CD4-positive, alpha-beta memory T cell (primary cell): ENCODE measurements at regions of chr3 and their contacts with region 1.

Region 1: DNA sequence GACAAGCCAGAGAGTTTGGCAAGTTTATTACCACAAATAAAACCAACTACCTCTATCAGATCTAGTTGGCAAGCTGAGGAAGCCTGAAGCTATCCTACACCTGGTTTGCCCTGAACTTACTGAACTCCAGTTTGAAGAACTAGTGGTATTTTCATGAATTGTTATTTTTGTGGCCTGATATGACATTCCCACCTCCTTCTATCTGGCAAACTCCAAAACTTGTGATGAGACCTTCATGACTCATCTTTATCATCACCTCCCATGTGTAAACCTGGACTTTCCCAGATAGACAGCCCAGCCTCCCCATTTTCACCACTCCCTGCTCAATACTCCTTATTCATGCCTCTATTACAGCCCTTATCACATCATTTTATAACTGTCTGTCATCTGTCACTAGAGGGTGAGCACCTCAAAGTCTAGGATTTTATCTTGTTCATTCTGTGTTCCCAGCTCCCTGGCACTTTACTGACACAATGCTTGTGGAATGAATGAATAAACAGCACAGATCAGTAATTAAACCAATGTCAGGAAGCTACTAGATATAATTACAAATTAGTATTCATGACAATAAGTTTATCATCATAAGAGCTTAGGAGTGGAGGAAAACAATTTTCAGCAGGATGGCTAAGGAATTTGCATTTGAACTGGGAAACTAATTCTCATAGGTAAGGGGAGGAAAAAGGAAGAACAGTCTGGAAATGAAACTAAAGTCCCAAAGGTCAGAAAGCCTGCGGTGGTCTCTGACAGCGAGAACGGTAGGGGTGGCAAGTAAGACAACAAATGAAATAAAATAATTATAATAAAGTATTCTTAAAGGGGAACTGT is 13.2 kb upstream of the TRANK1 start:
- DNase-seq: no peak
- H3K4me3 ChIP-seq: no peak overlapping the region
- H3K4me3 Mint-ChIP-seq: peak overlapping the region in 5 of 8 donors; percentile 4 to 65 (median 40)
- H3K27ac ChIP-seq: no peak overlapping the region
- H3K27ac Mint-ChIP-seq: peak overlapping the region; percentile 61 to 85 (median 77)
- H3K4me1 ChIP-seq: peaks cover 9% of the 10 kb centered on the region
- H3K4me1 Mint-ChIP-seq: peaks cover 10 to 12% (median 11%) of the 10 kb centered on the region in 4 donors
- H3K27me3 ChIP-seq: no peaks in the 10 kb centered on the region
- H3K27me3 Mint-ChIP-seq: no peaks in the 10 kb centered on the region

Region 2: DNA sequence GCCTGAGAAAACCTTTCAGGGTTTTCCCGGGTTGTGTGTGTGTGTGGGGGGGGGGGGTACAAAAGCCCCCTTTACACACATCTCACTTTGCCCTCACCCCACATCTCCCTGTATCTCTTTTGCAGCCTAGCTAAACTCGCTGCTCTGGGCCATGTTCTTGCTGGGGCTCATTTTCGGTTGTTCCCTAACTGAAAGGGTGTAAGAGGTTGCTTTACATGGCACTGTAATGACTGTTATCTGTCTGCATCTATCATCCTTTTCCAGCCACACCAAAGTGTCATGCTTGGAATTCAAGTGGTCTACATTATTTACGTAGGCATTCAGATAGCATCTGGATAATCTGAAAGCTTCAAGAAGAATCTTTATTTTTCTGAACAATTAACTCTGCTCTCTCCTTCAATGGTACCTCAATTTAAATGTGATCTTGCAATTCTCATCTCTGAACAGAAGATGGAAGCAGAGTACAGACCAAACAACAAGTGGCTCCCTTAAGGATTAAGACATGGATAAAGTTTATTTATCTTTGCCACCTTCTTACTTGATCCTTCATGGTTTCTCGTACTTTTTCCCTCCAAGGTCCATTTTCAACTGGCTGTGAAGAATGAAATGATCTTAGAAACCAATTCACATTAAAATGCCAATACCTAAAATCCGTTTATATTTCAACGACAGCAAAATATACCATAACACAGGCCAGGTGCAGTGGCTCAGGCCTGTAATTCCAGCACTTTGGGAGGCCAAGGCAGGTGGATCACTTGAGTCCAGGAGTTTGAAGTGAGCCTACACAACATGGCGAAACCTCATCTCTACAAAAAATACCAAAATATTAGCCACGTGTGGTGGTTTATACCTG is 228.6 kb before region 1 on chr3:
- CTCF ChIA-PET with region 1: interaction called, 29 read pairs
- POLR2A ChIA-PET with region 1: no interaction called
- intact Hi-C with region 1: no loop called
- DNase-seq: peak in 4 of 5 donors; percentile 14 to 26 (median 20)
- H3K4me3 ChIP-seq: no peak overlapping the region
- H3K4me3 Mint-ChIP-seq: no peak overlapping the region
- H3K27ac ChIP-seq: no peak overlapping the region
- H3K27ac Mint-ChIP-seq: no peak overlapping the region
- H3K4me1 ChIP-seq: no peaks in the 10 kb centered on the region
- H3K4me1 Mint-ChIP-seq: no peaks in the 10 kb centered on the region
- H3K27me3 ChIP-seq: no peaks in the 10 kb centered on the region
- H3K27me3 Mint-ChIP-seq: peaks cover 2 to 15% of the 10 kb centered on the region in 2 donors

Region 3: DNA sequence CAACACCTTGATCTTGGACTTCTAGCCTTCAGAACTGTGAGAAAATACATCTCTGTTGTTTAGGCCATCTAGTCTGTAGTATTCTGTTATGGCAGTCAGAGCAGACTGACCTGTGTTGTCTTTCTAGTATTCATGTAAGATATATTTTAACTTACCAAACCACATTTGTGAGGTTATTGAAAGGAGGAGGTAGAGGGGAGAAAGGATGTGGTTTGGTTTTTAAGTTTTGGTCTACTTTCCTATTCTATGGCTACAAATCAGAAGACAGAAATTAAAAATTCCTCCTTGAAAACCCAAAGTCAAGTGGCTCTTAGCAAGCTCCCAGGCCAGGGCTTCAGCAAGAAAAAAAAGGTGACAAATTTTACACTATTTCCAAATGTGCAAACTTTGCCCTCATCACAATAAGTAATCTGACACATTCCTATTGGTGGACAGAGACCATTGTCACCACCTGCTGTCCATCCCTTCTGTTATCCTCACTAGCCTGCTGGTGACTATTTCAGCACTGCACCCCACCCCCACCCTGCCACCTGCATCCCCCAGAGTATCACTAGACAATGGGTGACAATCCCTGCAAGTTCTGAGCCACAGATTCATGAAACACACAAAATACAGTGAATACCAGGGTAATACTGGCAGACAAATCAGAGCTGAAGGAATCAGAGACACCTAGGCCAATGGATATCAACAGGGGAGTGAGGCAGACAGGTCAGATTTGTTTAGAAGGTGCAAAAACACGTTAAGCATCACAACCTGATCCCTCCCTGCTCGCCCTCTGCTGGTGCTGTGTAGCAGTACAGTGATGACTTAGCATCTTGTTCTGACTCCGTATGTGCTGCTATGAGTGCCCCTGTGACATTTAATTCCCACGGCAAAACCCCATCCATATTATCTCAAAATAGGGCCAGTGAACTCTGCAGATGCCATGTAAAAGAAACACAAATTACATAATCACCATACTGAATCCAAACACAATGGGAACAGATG is 114.7 kb before region 1 on chr3:
- CTCF ChIA-PET with region 1: interaction called, 11 read pairs
- POLR2A ChIA-PET with region 1: no interaction called
- intact Hi-C with region 1: loop called (anchors 1 kb)
- DNase-seq: peak; percentile 25 to 49 (median 39)
- H3K4me3 ChIP-seq: no peak overlapping the region
- H3K4me3 Mint-ChIP-seq: peak overlapping the region in 7 of 8 donors; percentile 18 to 79 (median 61)
- H3K27ac ChIP-seq: no peak overlapping the region
- H3K27ac Mint-ChIP-seq: peak overlapping the region; percentile 12 to 84 (median 69)
- H3K4me1 ChIP-seq: peaks cover 24% of the 10 kb centered on the region
- H3K4me1 Mint-ChIP-seq: peaks cover 25 to 42% (median 34%) of the 10 kb centered on the region in 4 donors
- H3K27me3 ChIP-seq: no peaks in the 10 kb centered on the region
- H3K27me3 Mint-ChIP-seq: no peaks in the 10 kb centered on the region

Region 4: GRCh38 chr3:36876181-36876936 is 81.7 kb before region 1 on chr3:
- CTCF ChIA-PET with region 1: interaction called, 31 read pairs
- POLR2A ChIA-PET with region 1: interaction called, 10 read pairs
- intact Hi-C with region 1: no loop called
- DNase-seq: peak; percentile 66 to 81 (median 74)
- H3K4me3 ChIP-seq: peak overlapping the region; percentile 6 to 24
- H3K4me3 Mint-ChIP-seq: peak overlapping the region; percentile 63 to 85 (median 78)
- H3K27ac ChIP-seq: peak overlapping the region; percentile 71
- H3K27ac Mint-ChIP-seq: peak overlapping the region; percentile 83 to 97 (median 95)
- H3K4me1 ChIP-seq: peaks cover 48% of the 10 kb centered on the region
- H3K4me1 Mint-ChIP-seq: peaks cover 50 to 65% (median 54%) of the 10 kb centered on the region in 4 donors
- H3K27me3 ChIP-seq: no peaks in the 10 kb centered on the region
- H3K27me3 Mint-ChIP-seq: no peaks in the 10 kb centered on the region

Region 5: GRCh38 chr3:36923523-36923943 is 34.5 kb before region 1 on chr3:
- CTCF ChIA-PET with region 1: interaction called, 28 read pairs
- POLR2A ChIA-PET with region 1: no interaction called
- intact Hi-C with region 1: no loop called
- DNase-seq: peak in 1 of 5 donors; percentile 25
- H3K4me3 ChIP-seq: no peak overlapping the region
- H3K4me3 Mint-ChIP-seq: peak overlapping the region in 2 of 8 donors; percentile 5 to 58
- H3K27ac ChIP-seq: no peak overlapping the region
- H3K27ac Mint-ChIP-seq: peak overlapping the region in 2 of 7 donors; percentile 6 to 64
- H3K4me1 ChIP-seq: peaks cover 4% of the 10 kb centered on the region
- H3K4me1 Mint-ChIP-seq: peaks cover 9 to 14% (median 11%) of the 10 kb centered on the region in 4 donors
- H3K27me3 ChIP-seq: no peaks in the 10 kb centered on the region
- H3K27me3 Mint-ChIP-seq: no peaks in the 10 kb centered on the region

Region 6: GRCh38 chr3:36969540-36970432 is 11.7 kb after region 1 on chr3:
- CTCF ChIA-PET with region 1: interaction called, 34 read pairs
- POLR2A ChIA-PET with region 1: interaction called, 3 read pairs
- intact Hi-C with region 1: no loop called
- DNase-seq: peak; percentile 43 to 83 (median 57)
- H3K4me3 ChIP-seq: no peak overlapping the region
- H3K4me3 Mint-ChIP-seq: peak overlapping the region in 5 of 8 donors; percentile 4 to 58 (median 29)
- H3K27ac ChIP-seq: peak overlapping the region; percentile 37
- H3K27ac Mint-ChIP-seq: peak overlapping the region; percentile 49 to 94 (median 87)
- H3K4me1 ChIP-seq: peaks cover 24% of the 10 kb centered on the region
- H3K4me1 Mint-ChIP-seq: peaks cover 14 to 31% (median 25%) of the 10 kb centered on the region in 4 donors
- H3K27me3 ChIP-seq: no peaks in the 10 kb centered on the region
- H3K27me3 Mint-ChIP-seq: no peaks in the 10 kb centered on the region

Region 7: DNA sequence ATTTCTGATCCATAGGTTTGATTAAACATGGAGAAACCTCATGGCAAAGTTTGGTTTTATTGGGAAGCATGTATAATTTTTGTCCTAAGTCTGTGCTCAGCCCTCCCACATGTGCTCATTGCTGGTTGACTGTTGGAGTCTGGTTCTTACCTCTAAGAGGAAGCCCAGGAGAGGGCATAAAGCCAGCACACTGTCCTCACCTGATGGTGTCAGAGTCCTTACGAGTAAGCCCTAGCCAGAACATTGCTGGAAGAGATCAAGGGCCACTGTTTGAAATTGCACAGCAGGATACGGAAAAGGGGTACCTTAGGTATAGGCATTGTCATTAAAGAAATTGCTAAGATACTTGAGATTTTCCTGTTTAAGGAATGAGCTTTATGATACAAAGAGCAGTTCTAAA is 56.5 kb after region 1 on chr3:
- CTCF ChIA-PET with region 1: no interaction called
- POLR2A ChIA-PET with region 1: no interaction called
- intact Hi-C with region 1: no loop called
- DNase-seq: no peak
- H3K4me3 ChIP-seq: no peak overlapping the region
- H3K4me3 Mint-ChIP-seq: no peak overlapping the region
- H3K27ac ChIP-seq: no peak overlapping the region
- H3K27ac Mint-ChIP-seq: no peak overlapping the region
- H3K4me1 ChIP-seq: no peaks in the 10 kb centered on the region
- H3K4me1 Mint-ChIP-seq: peaks cover 0 to 2% (median 0%) of the 10 kb centered on the region in 4 donors
- H3K27me3 ChIP-seq: no peaks in the 10 kb centered on the region
- H3K27me3 Mint-ChIP-seq: no peaks in the 10 kb centered on the region

Region 8: GRCh38 chr3:37096288-37096687 is 138.2 kb after region 1 on chr3:
- CTCF ChIA-PET with region 1: no interaction called
- POLR2A ChIA-PET with region 1: no interaction called
- intact Hi-C with region 1: no loop called
- DNase-seq: no peak
- H3K4me3 ChIP-seq: no peak overlapping the region
- H3K4me3 Mint-ChIP-seq: no peak overlapping the region
- H3K27ac ChIP-seq: no peak overlapping the region
- H3K27ac Mint-ChIP-seq: no peak overlapping the region
- H3K4me1 ChIP-seq: no peaks in the 10 kb centered on the region
- H3K4me1 Mint-ChIP-seq: peaks cover 0 to 3% (median 2%) of the 10 kb centered on the region in 4 donors
- H3K27me3 ChIP-seq: no peaks in the 10 kb centered on the region
- H3K27me3 Mint-ChIP-seq: no peaks in the 10 kb centered on the region